Activated CD8-positive, alpha-beta T cell treated with anti-CD3 and anti-CD28 coated beads, Interleukin-2, amount 10 ng/mL, durations not matched to agents 7 days and 5 days (primary cell): ENCODE measurements at regions of chr11 and their contacts with region 1.

Region 1: GRCh38 chr11:110349138-110349996 is 53.0 kb upstream of the RDX start:
- DNase-seq: peak; percentile 46
- ATAC-seq: peak; percentile 74
- H3K4me3 Mint-ChIP-seq: peak overlapping the region; percentile 41
- H3K27ac Mint-ChIP-seq: peak overlapping the region; percentile 94
- H3K4me1 Mint-ChIP-seq: peaks cover 51% of the 10 kb centered on the region
- H3K27me3 Mint-ChIP-seq: no peaks in the 10 kb centered on the region

Region 2: GRCh38 chr11:110296226-110297075 is 52.9 kb before region 1 on chr11 and contains the start of gene RDX:
- CTCF ChIA-PET with region 1: interaction called, 3 read pairs
- POLR2A ChIA-PET with region 1: interaction called, 12 read pairs
- DNase-seq: peak; percentile 61
- ATAC-seq: peak; percentile 73
- H3K4me3 Mint-ChIP-seq: peak within 1 kb of the TSS; percentile 91
- H3K27ac Mint-ChIP-seq: peak within 1 kb of the TSS; percentile 80
- H3K4me1 Mint-ChIP-seq: peaks cover 37% of the 10 kb centered on the region
- H3K27me3 Mint-ChIP-seq: no peaks in the 10 kb centered on the region
- total RNA-seq, gene RDX: 37.9 to 39.6 TPM

Region 3: GRCh38 chr11:110327508-110327907 is 21.9 kb before region 1 on chr11:
- CTCF ChIA-PET with region 1: interaction called, 5 read pairs
- POLR2A ChIA-PET with region 1: interaction called, 12 read pairs
- DNase-seq: no peak
- ATAC-seq: no peak
- H3K4me3 Mint-ChIP-seq: peak overlapping the region; percentile 76
- H3K27ac Mint-ChIP-seq: peak overlapping the region; percentile 2
- H3K4me1 Mint-ChIP-seq: peaks cover 16% of the 10 kb centered on the region
- H3K27me3 Mint-ChIP-seq: no peaks in the 10 kb centered on the region

Region 4: DNA sequence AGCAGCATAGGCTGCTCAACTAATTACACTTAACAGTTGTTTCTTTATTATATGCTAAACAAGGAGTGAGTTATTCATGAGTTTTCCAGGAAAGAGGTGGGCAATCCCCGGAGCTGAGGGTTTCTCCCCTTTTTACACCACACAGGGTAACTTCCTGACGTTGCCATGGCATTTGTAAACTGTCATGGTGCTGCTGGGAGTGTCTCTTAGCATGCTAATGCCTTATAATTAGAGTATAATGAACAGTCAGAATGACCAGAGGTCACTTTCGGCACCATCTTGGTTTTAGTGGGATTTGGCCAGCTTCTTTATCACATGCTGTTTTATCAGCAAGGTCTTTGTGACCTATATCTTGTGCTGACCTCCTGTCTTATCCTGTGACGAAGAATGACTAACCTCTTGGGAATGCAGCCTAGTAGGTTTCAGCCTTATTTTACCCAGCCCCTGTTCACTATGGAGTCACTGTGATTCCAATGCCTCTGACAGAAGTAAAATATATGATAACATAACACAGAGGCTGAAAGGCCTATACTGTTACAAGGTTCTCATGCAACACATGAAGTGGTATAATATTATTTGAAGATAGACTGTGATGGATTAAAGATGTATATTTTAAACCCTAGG is 11.7 kb before region 1 on chr11:
- CTCF ChIA-PET with region 1: interaction called, 13 read pairs
- POLR2A ChIA-PET with region 1: interaction called, 14 read pairs
- DNase-seq: peak; percentile 32
- ATAC-seq: peak; percentile 51
- H3K4me3 Mint-ChIP-seq: no peak overlapping the region
- H3K27ac Mint-ChIP-seq: no peak overlapping the region
- H3K4me1 Mint-ChIP-seq: peaks cover 18% of the 10 kb centered on the region
- H3K27me3 Mint-ChIP-seq: no peaks in the 10 kb centered on the region

Region 5: DNA sequence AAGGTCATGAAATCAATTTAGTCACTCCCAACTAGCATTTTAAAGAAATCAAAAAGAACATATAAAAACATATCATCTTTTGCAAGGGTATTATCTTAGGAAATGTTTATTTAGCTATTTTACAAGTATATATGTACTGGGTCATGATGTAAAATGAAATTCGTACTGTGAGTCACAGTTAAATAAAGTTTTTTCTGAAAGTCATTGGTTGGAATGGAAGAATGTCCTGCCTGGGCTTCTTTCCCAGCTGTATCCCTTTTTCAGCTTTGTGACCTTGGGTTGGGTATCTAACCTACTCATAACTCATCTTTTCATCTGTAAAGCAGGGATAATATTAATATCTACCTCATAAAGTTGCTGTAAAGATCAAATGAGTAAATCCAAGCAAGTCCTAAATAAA is 96.1 kb after region 1 on chr11:
- CTCF ChIA-PET with region 1: no interaction called
- POLR2A ChIA-PET with region 1: no interaction called
- DNase-seq: no peak
- ATAC-seq: no peak
- H3K4me3 Mint-ChIP-seq: no peak overlapping the region
- H3K27ac Mint-ChIP-seq: no peak overlapping the region
- H3K4me1 Mint-ChIP-seq: peaks cover 24% of the 10 kb centered on the region
- H3K27me3 Mint-ChIP-seq: no peaks in the 10 kb centered on the region